Natural killer cell (primary cell): ENCODE measurements at regions of chr6 and their contacts with region 1.

Region 1: GRCh38 chr6:159042003-159042825 is 2.6 kb downstream of the TAGAP start:
- DNase-seq: peak; percentile 62 to 95
- ATAC-seq: peak; percentile 43 to 75 (median 56)
- H3K4me3 ChIP-seq: peak overlapping the region; percentile 61
- H3K4me3 Mint-ChIP-seq: peak overlapping the region; percentile 98
- H3K27ac ChIP-seq: peak overlapping the region; percentile 87
- H3K27ac Mint-ChIP-seq: peak overlapping the region; percentile 97
- H3K4me1 ChIP-seq: peaks cover 53% of the 10 kb centered on the region
- H3K4me1 Mint-ChIP-seq: peaks cover 74 to 75% of the 10 kb centered on the region in 2 donors
- H3K27me3 ChIP-seq: no peaks in the 10 kb centered on the region
- H3K27me3 Mint-ChIP-seq: no peaks in the 10 kb centered on the region
- CTCF ChIP-seq: peak; percentile 99

Region 2: DNA sequence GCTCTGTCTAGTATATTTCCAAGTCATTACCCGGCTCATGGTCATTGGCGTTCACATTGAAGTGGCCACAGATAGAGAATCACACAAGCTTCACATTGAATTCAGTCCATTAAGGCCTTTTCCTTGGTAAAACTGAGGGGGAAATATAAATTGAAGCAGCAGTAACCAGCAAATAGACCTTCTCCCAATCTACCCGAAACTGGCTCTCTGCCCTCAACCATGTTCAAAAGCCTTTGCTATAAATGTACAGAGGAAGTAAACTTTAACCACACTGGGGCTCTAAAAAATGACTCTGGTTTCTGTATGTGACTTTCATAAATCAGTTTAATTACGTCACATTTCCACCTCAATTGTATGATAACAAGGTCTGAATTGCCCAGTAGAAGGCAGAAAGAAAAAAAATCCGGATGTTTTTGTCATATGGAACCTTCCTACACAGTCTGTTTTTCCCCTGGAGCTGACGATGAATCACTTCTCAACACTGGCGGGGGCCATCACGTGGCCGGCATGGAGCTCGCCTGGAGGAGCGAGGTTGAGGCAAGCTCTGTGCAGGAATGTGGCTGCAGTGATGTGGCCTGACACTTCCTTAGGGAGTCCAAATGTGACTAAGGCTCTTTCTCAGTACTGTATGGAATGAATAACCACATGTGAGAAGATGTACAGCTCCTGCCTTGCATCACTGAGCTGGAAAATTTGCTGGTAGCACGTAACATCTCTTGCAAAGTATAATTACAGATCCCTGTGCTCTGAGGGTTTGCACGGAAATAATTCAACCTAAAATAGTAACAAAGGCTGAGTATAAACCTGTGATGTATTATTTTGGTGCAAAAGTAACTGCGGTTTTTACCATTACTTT is 1277.8 kb before region 1 on chr6:
- intact Hi-C with region 1: loop called (anchors 5 kb)
- DNase-seq: peak; percentile 66 to 92
- ATAC-seq: peak; percentile 82 to 88 (median 83)
- H3K4me3 ChIP-seq: peak overlapping the region; percentile 1
- H3K4me3 Mint-ChIP-seq: peak overlapping the region; percentile 83
- H3K27ac ChIP-seq: peak overlapping the region; percentile 56
- H3K27ac Mint-ChIP-seq: peak overlapping the region; percentile 78 to 95
- H3K4me1 ChIP-seq: peaks cover 50% of the 10 kb centered on the region
- H3K4me1 Mint-ChIP-seq: peaks cover 21 to 43% of the 10 kb centered on the region in 2 donors
- H3K27me3 ChIP-seq: no peaks in the 10 kb centered on the region
- H3K27me3 Mint-ChIP-seq: peaks cover 0 to 12% of the 10 kb centered on the region in 2 donors
- CTCF ChIP-seq: no peak

Region 3: DNA sequence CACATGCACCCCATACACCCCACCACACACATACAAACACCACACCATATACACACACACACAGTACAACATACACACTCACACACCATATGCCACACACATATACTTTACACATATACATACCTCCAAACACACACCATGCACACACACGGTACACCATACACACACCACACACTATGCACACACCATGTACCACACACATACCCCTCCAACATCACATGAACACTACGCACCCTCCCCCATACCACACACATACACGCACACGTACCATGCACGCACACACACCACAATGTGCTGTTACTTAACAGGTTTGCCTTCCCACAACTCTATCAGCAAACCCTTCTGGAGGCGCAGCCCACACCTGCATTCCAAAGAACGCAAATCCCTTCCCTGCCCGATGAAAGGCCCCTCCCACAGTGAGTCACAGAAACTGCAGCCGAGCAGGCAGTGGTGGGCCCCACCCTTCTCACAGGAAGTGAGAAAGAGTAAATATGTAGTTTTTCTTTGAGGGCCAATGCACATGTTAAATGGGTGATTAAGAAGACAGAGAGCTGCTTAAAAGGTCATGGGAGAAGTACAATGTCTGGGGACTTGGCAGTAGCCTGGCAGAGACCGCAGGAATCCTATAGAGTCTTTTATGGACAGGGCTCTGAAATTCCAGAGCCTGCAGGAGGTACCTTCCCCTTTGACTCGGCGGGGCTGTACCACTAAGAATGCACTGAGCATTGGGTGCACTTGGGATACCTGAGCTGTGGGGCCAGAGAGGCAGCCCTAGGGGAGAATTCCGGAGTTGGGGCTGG is 188.9 kb before region 1 on chr6:
- intact Hi-C with region 1: loop called (anchors 2 kb)
- DNase-seq: peak; percentile 77 to 93
- ATAC-seq: peak; percentile 65 to 86 (median 73)
- H3K4me3 ChIP-seq: peak overlapping the region; percentile 22
- H3K4me3 Mint-ChIP-seq: no peak overlapping the region
- H3K27ac ChIP-seq: peak overlapping the region; percentile 91
- H3K27ac Mint-ChIP-seq: no peak overlapping the region
- H3K4me1 ChIP-seq: peaks cover 64% of the 10 kb centered on the region
- H3K4me1 Mint-ChIP-seq: peaks cover 25 to 27% of the 10 kb centered on the region in 2 donors
- H3K27me3 ChIP-seq: no peaks in the 10 kb centered on the region
- H3K27me3 Mint-ChIP-seq: no peaks in the 10 kb centered on the region
- CTCF ChIP-seq: no peak

Region 4: GRCh38 chr6:159008656-159009288 is 33.4 kb before region 1 on chr6:
- intact Hi-C with region 1: loop called (anchors 2 kb)
- DNase-seq: peak in 1 of 2 donors; percentile 79
- ATAC-seq: peak; percentile 84 to 88 (median 87)
- H3K4me3 ChIP-seq: peak overlapping the region; percentile 18
- H3K4me3 Mint-ChIP-seq: peak overlapping the region; percentile 62
- H3K27ac ChIP-seq: peak overlapping the region; percentile 30
- H3K27ac Mint-ChIP-seq: peak overlapping the region; percentile 76 to 77
- H3K4me1 ChIP-seq: peaks cover 19% of the 10 kb centered on the region
- H3K4me1 Mint-ChIP-seq: peaks cover 10 to 30% of the 10 kb centered on the region in 2 donors
- H3K27me3 ChIP-seq: no peaks in the 10 kb centered on the region
- H3K27me3 Mint-ChIP-seq: no peaks in the 10 kb centered on the region
- CTCF ChIP-seq: peak; percentile 74

Region 5: GRCh38 chr6:159062564-159062945 is 20.3 kb after region 1 on chr6:
- intact Hi-C with region 1: loop called (anchors 1 kb)
- DNase-seq: peak; percentile 49 to 88
- ATAC-seq: peak; percentile 78 to 88 (median 86)
- H3K4me3 ChIP-seq: no peak overlapping the region
- H3K4me3 Mint-ChIP-seq: peak overlapping the region; percentile 72
- H3K27ac ChIP-seq: peak overlapping the region; percentile 98
- H3K27ac Mint-ChIP-seq: peak overlapping the region; percentile 94 to 99
- H3K4me1 ChIP-seq: peaks cover 47% of the 10 kb centered on the region
- H3K4me1 Mint-ChIP-seq: peaks cover 72 to 73% of the 10 kb centered on the region in 2 donors
- H3K27me3 ChIP-seq: no peaks in the 10 kb centered on the region
- H3K27me3 Mint-ChIP-seq: no peaks in the 10 kb centered on the region
- CTCF ChIP-seq: no peak

Region 6: GRCh38 chr6:159979136-159979874 is 937.1 kb after region 1 on chr6:
- intact Hi-C with region 1: loop called (anchors 2 kb)
- DNase-seq: peak; percentile 74 to 77
- ATAC-seq: peak; percentile 68 to 86 (median 80)
- H3K4me3 ChIP-seq: no peak overlapping the region
- H3K4me3 Mint-ChIP-seq: peak overlapping the region; percentile 94
- H3K27ac ChIP-seq: peak overlapping the region; percentile 93
- H3K27ac Mint-ChIP-seq: peak overlapping the region; percentile 94 to 99
- H3K4me1 ChIP-seq: peaks cover 81% of the 10 kb centered on the region
- H3K4me1 Mint-ChIP-seq: peaks cover 97 to 100% of the 10 kb centered on the region in 2 donors
- H3K27me3 ChIP-seq: no peaks in the 10 kb centered on the region
- H3K27me3 Mint-ChIP-seq: no peaks in the 10 kb centered on the region
- CTCF ChIP-seq: no peak